ENCODE measurements at regions of chr11 and their contacts with region 1.

Region 1: DNA sequence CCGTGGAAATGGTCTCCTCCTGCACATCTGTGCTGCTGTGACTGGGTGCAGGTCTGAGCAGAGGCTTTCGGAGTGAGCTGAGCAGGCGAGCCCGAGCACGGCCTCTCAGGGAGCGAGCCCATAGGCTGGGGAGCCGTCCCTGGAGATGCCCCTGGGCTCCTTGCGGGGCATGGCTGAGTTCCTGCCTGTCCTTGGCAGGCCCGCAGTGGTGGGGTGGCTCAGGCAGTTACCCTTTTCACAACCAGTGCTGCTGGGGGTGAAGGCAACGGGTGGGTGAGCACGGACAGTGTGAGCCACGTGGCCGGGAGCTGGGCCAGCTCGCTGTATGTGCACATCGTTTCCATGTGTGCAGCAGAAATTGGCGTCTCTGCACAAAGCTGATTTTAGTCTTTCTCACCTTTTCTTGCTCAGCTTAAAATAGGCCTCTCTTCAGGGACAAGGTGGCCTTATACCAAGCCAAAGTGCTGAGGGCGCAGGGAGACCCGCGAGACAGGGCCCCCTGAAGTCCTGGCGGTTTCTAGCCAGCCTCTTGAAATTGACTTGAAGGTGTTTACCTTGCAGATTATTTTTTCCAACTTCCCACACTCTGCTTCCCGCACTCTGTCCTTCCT is at the start of gene TP53AIP1:
- DNase-seq: no peak
- H3K4me3 ChIP-seq: no peak within 1 kb of the TSS
- H3K27ac ChIP-seq: peak within 1 kb of the TSS; percentile 76 to 80
- H3K4me1 ChIP-seq: no peaks in the 10 kb centered on the region
- H3K27me3 ChIP-seq: peaks cover 0 to 28% of the 10 kb centered on the region in 2 donors
- CTCF ChIP-seq: no peak
- POLR2A ChIP-seq: no peak
- total RNA-seq, gene TP53AIP1: 0.16 to 0.59 (median 0.33) TPM

Region 2: GRCh38 chr11:127789927-127790326 is 1153.0 kb before region 1 on chr11:
- intact Hi-C with region 1: loop called (anchors 5 kb)
- DNase-seq: no peak
- H3K4me3 ChIP-seq: no peak overlapping the region
- H3K27ac ChIP-seq: no peak overlapping the region
- H3K4me1 ChIP-seq: no peaks in the 10 kb centered on the region
- H3K27me3 ChIP-seq: no peaks in the 10 kb centered on the region
- CTCF ChIP-seq: no peak
- POLR2A ChIP-seq: no peak

Region 3: DNA sequence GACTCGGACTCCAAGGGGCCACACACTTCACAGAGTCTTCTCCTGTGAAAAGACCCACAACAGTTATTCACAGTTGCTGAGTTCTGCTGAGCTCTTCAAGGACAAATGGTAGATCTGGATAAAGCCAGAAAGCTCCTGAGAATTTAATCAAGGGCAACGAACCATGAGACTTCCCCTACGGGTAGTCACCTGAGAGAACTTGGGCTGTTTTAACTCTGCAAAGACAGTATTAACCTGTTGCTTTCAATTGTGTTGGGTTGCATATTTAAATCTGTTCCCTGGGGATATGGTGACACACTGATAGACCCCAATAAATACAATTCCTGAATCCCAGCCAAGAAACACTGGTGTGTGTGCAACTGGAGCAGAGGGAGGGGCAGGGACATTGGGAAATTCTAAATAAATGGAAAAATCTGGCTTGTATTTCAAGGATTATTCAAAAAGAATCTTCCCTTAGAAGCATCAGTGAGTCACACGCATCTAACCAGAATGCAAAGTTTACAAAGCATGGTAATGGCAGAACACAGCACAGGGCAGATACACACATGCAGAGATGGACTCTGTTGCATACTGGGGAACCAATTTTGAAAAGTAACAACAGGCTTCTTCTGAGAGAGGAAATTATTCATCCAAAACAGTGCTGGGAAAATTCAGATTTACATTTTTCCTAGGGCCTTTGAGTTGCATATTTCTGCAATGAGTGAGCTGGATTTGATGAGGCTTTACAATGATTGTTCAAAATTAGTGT is 79.8 kb before region 1 on chr11:
- intact Hi-C with region 1: no loop called
- DNase-seq: no peak
- H3K4me3 ChIP-seq: no peak overlapping the region
- H3K27ac ChIP-seq: no peak overlapping the region
- H3K4me1 ChIP-seq: no peaks in the 10 kb centered on the region
- H3K27me3 ChIP-seq: no peaks in the 10 kb centered on the region
- CTCF ChIP-seq: no peak
- POLR2A ChIP-seq: no peak

Measured in breast epithelium (tissue), 4 donors.